Heart left ventricle (tissue), 16 donors: ENCODE measurements at regions of chr18 and their contacts with region 1.

Region 1: GRCh38 chr18:3261371-3262246 is at the start of gene MYL12B:
- DNase-seq: peak; percentile 86 to 92 (median 87)
- ATAC-seq: peak; percentile 36 to 94 (median 74)
- H3K4me3 ChIP-seq: peak within 1 kb of the TSS; percentile 68 to 96 (median 88)
- H3K27ac ChIP-seq: peak within 1 kb of the TSS; percentile 95 to 100 (median 97)
- H3K4me1 ChIP-seq: peaks cover 12 to 86% (median 48%) of the 10 kb centered on the region in 12 donors
- H3K27me3 ChIP-seq: no peaks in the 10 kb centered on the region
- CTCF ChIP-seq: peak in 2 of 12 donors; percentile 17 to 18
- POLR2A ChIP-seq: peak in 1 of 2 donors; percentile 46
- total RNA-seq, gene MYL12B: 185 to 292 (median 210) TPM

Region 2: DNA sequence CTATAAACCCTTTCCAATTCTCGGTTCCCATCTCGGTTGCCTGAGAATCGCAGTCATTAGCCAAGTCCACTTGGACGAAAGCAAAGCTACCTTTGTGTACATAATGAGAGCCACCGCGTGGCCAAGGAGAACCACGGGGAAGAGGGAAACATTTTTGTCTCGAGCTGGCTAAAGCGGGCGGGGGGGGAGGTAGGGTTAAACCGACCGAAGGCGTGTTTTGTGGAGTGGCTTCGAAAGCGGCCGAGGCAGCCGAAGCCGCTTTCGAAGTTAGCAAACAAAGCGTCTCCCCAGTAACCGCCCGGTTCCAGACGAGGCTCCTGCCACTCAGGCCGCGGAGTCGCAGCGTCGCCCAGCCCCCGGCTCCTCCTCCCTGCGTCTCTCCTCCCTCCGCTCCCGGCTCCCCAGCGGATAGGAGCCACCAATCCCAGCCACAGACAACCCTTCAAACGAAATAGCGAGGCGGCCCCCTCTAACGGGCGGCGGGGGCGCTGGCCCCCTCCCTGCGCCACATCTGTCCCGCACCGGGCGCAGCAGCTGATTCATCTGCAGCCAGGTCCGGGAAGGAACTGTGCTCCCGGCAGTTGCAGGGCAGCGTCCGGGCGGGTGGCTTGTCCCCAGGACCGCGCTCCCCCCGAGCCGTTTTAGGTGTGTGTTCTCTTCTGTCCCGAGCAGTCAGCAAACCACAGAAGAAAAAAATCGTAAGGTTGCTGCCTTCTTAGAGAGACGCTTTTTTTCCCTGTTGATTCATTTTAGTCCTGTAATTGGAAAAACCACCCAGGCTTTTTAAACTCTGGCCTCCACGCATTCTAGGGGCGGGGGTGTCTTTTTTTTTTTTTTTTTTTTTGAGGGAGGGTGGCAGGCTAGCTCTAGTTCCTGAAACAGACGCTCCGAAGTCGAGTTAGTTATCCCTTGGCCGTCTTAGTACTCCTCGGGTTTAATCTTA is 186.6 kb after region 1 on chr18:
- intact Hi-C with region 1: loop called in 4 of 10 experiments (anchors 5 kb)
- DNase-seq: peak; percentile 94 to 96 (median 96)
- ATAC-seq: peak; percentile 86 to 92 (median 87)
- H3K4me3 ChIP-seq: peak overlapping the region; percentile 65 to 93 (median 78)
- H3K27ac ChIP-seq: peak overlapping the region; percentile 92 to 100 (median 97)
- H3K4me1 ChIP-seq: peaks cover 0 to 27% (median 13%) of the 10 kb centered on the region in 12 donors
- H3K27me3 ChIP-seq: no peaks in the 10 kb centered on the region
- CTCF ChIP-seq: peak in 4 of 12 donors; percentile 3 to 31 (median 20)
- POLR2A ChIP-seq: peak in 1 of 2 donors; percentile 91

Region 3: GRCh38 chr18:3604498-3605408 is 343.1 kb after region 1 on chr18:
- intact Hi-C with region 1: loop called in 1 of 10 experiments (anchors 5 kb)
- DNase-seq: no peak
- ATAC-seq: peak; percentile 17 to 67 (median 58)
- H3K4me3 ChIP-seq: peak overlapping the region in 10 of 12 donors; percentile 18 to 61 (median 48)
- H3K27ac ChIP-seq: peak overlapping the region; percentile 70 to 94 (median 87)
- H3K4me1 ChIP-seq: peaks cover 7 to 51% (median 30%) of the 10 kb centered on the region in 12 donors
- H3K27me3 ChIP-seq: no peaks in the 10 kb centered on the region
- CTCF ChIP-seq: no peak
- POLR2A ChIP-seq: no peak